H1 (cell line): ENCODE measurements at regions of chr13 and their contacts with region 1.

Region 1: GRCh38 chr13:49869519-49869918 is 66.6 kb downstream of the SPRYD7 start:
- DNase-seq: peak; percentile 23 to 55
- H3K4me3 ChIP-seq: no peak overlapping the region
- H3K27ac ChIP-seq: no peak overlapping the region
- H3K4me1 ChIP-seq: no peaks in the 10 kb centered on the region
- H3K27me3 ChIP-seq: no peaks in the 10 kb centered on the region
- CTCF ChIP-seq: peak; percentile 56 to 76 (median 62)
- EP300 ChIP-seq: no peak
- POLR2A ChIP-seq: no peak
- RAD21 ChIP-seq: peak; percentile 70 to 77

Region 2: DNA sequence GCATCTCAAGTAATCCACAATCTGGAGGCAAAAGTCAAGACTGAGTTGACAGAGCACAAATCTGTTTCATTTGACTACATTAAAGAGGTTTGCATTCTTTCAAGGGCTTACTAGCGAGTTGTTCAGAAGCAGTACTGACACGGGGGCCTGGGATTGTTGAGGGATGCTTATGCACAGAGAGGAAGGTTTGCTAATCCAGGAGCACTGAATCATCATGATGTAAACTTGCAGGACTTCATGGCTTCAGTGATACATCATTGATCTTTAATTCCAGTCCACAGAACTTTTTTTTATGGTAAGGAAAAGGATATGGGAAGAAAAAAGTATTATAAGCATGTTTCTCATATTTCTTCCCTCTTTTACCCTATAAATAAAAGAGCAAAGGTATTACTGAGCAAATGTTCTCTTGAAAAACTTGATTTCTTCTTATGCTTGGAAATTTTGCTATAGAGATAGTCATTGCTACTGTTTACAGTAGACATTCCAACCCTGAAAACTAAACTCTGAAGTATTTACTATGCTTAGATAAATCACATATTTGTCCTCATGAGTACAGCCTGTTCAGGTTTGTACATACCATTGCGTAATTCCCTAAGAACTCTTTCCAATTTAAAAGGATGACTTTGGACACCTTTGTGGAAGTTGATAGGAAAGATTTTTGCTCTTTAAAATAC is 11.2 kb before region 1 on chr13:
- CTCF ChIA-PET with region 1: interaction called, 10 read pairs
- POLR2A ChIA-PET with region 1: no interaction called
- DNase-seq: no peak
- H3K4me3 ChIP-seq: no peak overlapping the region
- H3K27ac ChIP-seq: no peak overlapping the region
- H3K4me1 ChIP-seq: no peaks in the 10 kb centered on the region
- H3K27me3 ChIP-seq: no peaks in the 10 kb centered on the region
- CTCF ChIP-seq: no peak
- EP300 ChIP-seq: no peak
- POLR2A ChIP-seq: no peak
- RAD21 ChIP-seq: no peak

Region 3: GRCh38 chr13:50425772-50426171 is 556.3 kb after region 1 on chr13:
- CTCF ChIA-PET with region 1: no interaction called
- POLR2A ChIA-PET with region 1: no interaction called
- DNase-seq: no peak
- H3K4me3 ChIP-seq: no peak overlapping the region
- H3K27ac ChIP-seq: no peak overlapping the region
- H3K4me1 ChIP-seq: peaks cover 0 to 3% (median 0%) of the 10 kb centered on the region in 4 experiments; a peak in 1 of 7 replicates
- H3K27me3 ChIP-seq: no peaks in the 10 kb centered on the region
- CTCF ChIP-seq: no peak
- EP300 ChIP-seq: no peak
- POLR2A ChIP-seq: no peak
- RAD21 ChIP-seq: no peak